Activated CD4-positive, alpha-beta T cell treated with anti-CD3 and anti-CD28 coated beads for 36 hours (primary cell): ENCODE measurements at regions of chr12 and their contacts with region 1.

Region 1: GRCh38 chr12:32039347-32039746 is 67.3 kb upstream of the BICD1 start:
- DNase-seq: no peak
- ATAC-seq: no peak
- H3K4me3 Mint-ChIP-seq: no peak overlapping the region
- H3K27ac Mint-ChIP-seq: no peak overlapping the region
- H3K4me1 Mint-ChIP-seq: no peaks in the 10 kb centered on the region
- H3K27me3 Mint-ChIP-seq: no peaks in the 10 kb centered on the region

Region 2: DNA sequence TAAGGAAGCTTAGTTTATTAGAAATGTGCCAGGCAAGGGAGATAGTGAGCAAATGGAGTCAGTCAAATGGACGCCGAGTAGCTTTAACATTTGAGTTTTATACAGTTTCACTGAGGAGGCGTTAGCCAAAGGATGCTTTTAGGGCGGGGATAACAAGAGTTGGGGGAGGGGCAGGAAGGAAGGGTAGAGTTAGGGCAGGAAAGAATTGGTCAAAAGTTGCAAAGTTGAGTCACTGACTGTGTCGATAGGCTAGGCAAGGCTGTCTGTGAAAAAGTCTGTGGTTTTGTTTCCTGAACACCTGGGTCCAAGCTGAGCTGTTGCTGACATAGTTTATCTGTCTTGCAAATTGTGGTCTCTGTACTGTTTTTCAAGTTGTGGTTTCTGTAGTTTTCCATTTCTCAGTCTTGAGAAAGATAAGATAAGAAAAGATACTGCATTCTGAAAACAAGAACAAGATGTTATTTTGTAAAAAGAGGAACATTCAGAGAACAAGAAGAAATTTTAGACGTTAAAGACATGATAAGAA is 142.8 kb before region 1 on chr12:
- CTCF ChIA-PET with region 1: no interaction called
- POLR2A ChIA-PET with region 1: no interaction called
- intact Hi-C with region 1: no loop called
- DNase-seq: peak; percentile 90
- ATAC-seq: peak; percentile 97
- H3K4me3 Mint-ChIP-seq: peak overlapping the region; percentile 50
- H3K27ac Mint-ChIP-seq: peak overlapping the region; percentile 99
- H3K4me1 Mint-ChIP-seq: peaks cover 57% of the 10 kb centered on the region
- H3K27me3 Mint-ChIP-seq: no peaks in the 10 kb centered on the region

Region 3: DNA sequence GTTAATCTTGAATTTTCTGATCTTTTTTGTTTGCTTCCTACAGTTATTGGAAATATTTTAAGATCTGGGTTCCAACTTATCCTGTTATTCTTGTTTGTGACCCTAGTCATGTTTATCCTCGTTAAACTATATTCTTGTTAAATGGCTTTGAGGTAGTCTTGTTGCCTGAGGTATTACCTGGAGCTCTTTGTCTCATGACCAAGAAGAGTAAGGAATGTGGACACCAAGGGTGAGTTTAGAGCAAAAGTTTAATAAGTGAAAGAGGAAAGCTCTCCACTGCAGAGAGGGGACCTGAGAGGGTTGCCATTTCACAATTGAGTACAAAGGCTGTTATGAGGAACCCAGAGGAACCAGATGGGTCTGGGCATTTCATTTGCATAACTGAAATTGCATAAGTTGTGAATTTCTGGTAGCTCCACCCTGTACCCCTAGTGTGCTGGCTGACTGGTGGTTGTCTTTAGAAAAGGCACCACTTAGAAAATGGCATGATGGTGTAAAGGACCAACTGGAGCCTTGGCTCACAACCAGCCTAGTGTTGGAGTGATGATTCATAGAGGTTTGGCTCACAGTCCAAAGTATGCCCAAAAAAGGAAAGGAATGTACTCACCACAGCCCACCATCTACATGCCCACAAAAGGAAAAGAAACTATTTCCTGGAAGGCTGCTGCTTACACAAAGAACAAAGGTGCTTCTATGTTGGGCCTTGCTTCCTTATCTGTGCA is 116.8 kb before region 1 on chr12:
- CTCF ChIA-PET with region 1: no interaction called
- POLR2A ChIA-PET with region 1: no interaction called
- intact Hi-C with region 1: no loop called
- DNase-seq: no peak
- ATAC-seq: peak; percentile 51
- H3K4me3 Mint-ChIP-seq: no peak overlapping the region
- H3K27ac Mint-ChIP-seq: peak overlapping the region; percentile 14
- H3K4me1 Mint-ChIP-seq: peaks cover 9% of the 10 kb centered on the region
- H3K27me3 Mint-ChIP-seq: no peaks in the 10 kb centered on the region

Region 4: GRCh38 chr12:32016680-32017482 is 22.5 kb before region 1 on chr12:
- CTCF ChIA-PET with region 1: no interaction called
- POLR2A ChIA-PET with region 1: no interaction called
- intact Hi-C with region 1: loop called in 1 of 2 experiments (anchors 1 kb)
- DNase-seq: no peak
- ATAC-seq: no peak
- H3K4me3 Mint-ChIP-seq: no peak overlapping the region
- H3K27ac Mint-ChIP-seq: no peak overlapping the region
- H3K4me1 Mint-ChIP-seq: peaks cover 19% of the 10 kb centered on the region
- H3K27me3 Mint-ChIP-seq: no peaks in the 10 kb centered on the region

Region 5: DNA sequence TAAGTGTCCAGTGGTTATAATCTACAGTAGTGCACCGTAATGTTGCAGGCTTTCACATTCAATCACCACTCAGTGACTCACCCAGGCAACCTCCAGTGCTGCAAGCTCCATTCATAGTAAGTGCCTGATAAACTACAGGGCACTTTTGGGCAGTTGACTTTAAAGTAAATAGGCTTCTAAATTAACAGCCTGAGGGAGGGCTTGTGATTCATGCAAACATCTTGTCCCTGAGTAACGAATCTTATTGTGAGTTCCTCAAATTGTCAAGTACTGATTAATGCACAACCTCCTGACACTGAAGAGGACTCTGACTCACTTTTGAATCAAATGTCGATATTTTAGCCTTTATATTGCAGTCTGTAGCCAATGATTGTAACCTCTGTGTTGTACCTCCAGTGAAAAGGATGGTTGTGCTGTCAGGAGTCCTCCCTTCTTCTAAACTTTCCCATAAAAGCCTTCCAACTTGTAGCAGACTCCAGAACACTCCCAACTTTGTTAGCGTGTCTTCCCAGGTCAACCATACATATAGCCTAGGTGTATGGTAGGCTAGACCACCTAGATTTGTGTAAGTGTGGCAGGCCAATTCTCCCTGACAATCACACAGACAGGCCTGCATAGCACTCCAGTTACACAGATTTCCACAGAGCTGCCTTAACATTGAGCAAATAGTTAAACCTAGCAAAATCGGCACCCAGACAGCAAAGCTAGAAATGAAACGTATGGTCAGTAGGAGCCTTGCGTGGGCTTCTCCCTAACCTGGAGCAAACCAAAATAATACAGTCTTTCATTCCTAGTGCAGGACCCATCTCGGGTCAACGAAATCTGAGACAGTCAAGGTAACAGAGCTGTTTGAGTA is 12.4 kb after region 1 on chr12:
- CTCF ChIA-PET with region 1: no interaction called
- POLR2A ChIA-PET with region 1: no interaction called
- intact Hi-C with region 1: no loop called
- DNase-seq: peak; percentile 41
- ATAC-seq: peak; percentile 76
- H3K4me3 Mint-ChIP-seq: no peak overlapping the region
- H3K27ac Mint-ChIP-seq: no peak overlapping the region
- H3K4me1 Mint-ChIP-seq: peaks cover 8% of the 10 kb centered on the region
- H3K27me3 Mint-ChIP-seq: no peaks in the 10 kb centered on the region

Region 6: GRCh38 chr12:32217354-32218310 is 178.3 kb after region 1 on chr12:
- CTCF ChIA-PET with region 1: no interaction called
- POLR2A ChIA-PET with region 1: no interaction called
- intact Hi-C with region 1: no loop called
- DNase-seq: no peak
- ATAC-seq: peak; percentile 69
- H3K4me3 Mint-ChIP-seq: no peak overlapping the region
- H3K27ac Mint-ChIP-seq: no peak overlapping the region
- H3K4me1 Mint-ChIP-seq: peaks cover 5% of the 10 kb centered on the region
- H3K27me3 Mint-ChIP-seq: no peaks in the 10 kb centered on the region